ENCODE measurements at regions of chr9 and their contacts with region 1.

Region 1: GRCh38 chr9:127450830-127451724 is at the starts of genes LRSAM1 and RPL12:
- DNase-seq: peak; percentile 78 to 97
- H3K4me3 ChIP-seq: peak within 1 kb of the TSS; percentile 99
- H3K27ac ChIP-seq: peak within 1 kb of the TSS; percentile 95
- H3K4me1 ChIP-seq: peaks cover 23% of the 10 kb centered on the region
- H3K27me3 ChIP-seq: no peaks in the 10 kb centered on the region
- CTCF ChIP-seq: no peak
- total RNA-seq, gene LRSAM1: 44.0 and 63.9 TPM in 2 replicates
- total RNA-seq, gene RPL12: 1,648 and 1,717 TPM in 2 replicates

Region 2: DNA sequence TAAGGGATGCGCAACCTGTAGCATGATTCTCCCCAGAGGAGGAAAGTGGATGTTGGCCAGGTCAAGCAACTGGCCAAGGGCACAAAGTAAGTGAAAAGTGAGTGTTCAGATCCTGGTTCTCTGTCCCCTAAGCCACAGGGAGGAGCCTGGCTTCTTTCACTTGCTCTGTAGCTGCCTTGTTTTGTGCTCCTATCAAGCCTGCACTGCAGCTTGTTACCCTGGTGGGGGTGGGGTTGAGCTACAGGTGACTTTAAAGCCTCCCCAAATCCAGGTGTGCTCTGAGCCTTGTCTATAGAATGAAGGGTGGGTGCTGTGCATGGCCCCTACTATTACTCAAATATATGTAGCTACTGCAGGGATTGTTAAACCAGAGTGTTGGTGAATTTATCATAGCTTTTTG is 503.5 kb before region 1 on chr9:
- CTCF ChIA-PET with region 1: no interaction called
- POLR2A ChIA-PET with region 1: no interaction called
- intact Hi-C with region 1: loop called (anchors 10 kb)
- DNase-seq: peak; percentile 50 to 61
- H3K4me3 ChIP-seq: no peak overlapping the region
- H3K27ac ChIP-seq: no peak overlapping the region
- H3K4me1 ChIP-seq: 0 out of 2 replicates have a peak, but pooled peaks cover 7% of the 10 kb centered on the region
- H3K27me3 ChIP-seq: no peaks in the 10 kb centered on the region
- CTCF ChIP-seq: peak; percentile 64

Region 3: DNA sequence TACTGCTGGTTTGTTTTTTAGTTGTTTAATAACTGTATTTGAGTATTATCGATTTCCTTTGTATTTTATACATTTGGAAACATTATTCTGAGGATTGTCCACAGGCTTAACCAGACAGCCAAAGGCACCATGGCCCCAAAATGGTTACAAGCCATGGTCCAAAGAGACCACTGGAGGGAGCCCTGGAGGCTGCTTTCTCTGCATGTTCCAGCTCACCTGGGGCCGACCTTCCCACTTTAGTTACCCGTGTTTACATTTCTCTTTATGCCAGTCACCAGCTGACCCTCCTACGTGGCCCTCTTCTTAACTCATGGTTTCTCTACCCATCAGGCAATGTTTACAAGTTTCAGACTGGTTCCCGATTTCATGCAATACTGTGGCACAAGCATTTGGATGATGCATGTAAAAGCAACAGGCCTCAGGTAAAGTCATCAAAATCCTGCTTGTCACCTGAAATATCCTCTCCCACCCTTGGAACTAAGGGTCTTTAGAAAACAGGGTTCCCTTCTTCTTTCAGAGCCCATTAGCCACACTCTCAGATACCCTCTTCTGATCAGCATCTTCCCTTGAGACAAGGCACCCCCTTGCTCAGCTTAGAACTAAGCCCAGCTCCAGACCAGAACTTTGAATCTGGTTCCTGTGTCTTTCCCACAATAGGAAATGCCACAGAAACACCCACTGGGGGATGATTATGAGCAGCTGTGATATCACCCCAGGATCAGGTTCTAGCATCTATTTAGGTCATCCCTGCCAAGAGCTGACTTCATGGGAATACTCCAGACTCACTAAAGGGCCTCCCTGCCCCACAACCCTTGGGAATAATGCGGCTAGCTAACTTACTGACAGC is 236.4 kb before region 1 on chr9:
- CTCF ChIA-PET with region 1: interaction called, 7 read pairs
- POLR2A ChIA-PET with region 1: no interaction called
- intact Hi-C with region 1: loop called (anchors 1 kb)
- DNase-seq: peak; percentile 49 to 75
- H3K4me3 ChIP-seq: no peak overlapping the region
- H3K27ac ChIP-seq: no peak overlapping the region
- H3K4me1 ChIP-seq: 0 out of 2 replicates have a peak, but pooled peaks cover 4% of the 10 kb centered on the region
- H3K27me3 ChIP-seq: no peaks in the 10 kb centered on the region
- CTCF ChIP-seq: peak; percentile 89

Region 4: DNA sequence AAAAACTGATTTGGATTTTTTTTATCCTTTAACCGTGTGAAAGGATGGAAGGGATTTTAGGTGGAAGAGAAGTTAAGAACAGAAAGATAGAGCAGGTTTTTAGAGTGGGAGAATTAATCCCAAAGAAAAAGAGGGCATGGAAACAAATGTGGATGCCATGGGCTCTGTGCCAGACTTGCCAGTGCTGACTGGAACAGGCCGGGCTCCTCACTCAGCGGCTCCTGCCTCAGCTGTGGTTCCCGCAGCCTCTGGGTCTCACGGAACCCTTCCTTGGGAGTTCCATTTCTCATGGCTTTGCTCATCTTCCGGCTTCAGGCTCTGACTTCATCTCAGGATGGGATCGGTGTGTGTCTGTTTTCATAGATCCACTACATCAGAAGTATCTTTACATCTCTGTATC is 84.5 kb before region 1 on chr9:
- CTCF ChIA-PET with region 1: interaction called, 10 read pairs
- POLR2A ChIA-PET with region 1: no interaction called
- intact Hi-C with region 1: no loop called
- DNase-seq: no peak
- H3K4me3 ChIP-seq: no peak overlapping the region
- H3K27ac ChIP-seq: no peak overlapping the region
- H3K4me1 ChIP-seq: no peaks in the 10 kb centered on the region
- H3K27me3 ChIP-seq: no peaks in the 10 kb centered on the region
- CTCF ChIP-seq: no peak

Region 5: GRCh38 chr9:127411122-127411521 is 40.0 kb before region 1 on chr9:
- CTCF ChIA-PET with region 1: interaction called, 10 read pairs
- POLR2A ChIA-PET with region 1: no interaction called
- intact Hi-C with region 1: no loop called
- DNase-seq: no peak
- H3K4me3 ChIP-seq: no peak overlapping the region
- H3K27ac ChIP-seq: no peak overlapping the region
- H3K4me1 ChIP-seq: no peaks in the 10 kb centered on the region
- H3K27me3 ChIP-seq: no peaks in the 10 kb centered on the region
- CTCF ChIP-seq: no peak

Region 6: DNA sequence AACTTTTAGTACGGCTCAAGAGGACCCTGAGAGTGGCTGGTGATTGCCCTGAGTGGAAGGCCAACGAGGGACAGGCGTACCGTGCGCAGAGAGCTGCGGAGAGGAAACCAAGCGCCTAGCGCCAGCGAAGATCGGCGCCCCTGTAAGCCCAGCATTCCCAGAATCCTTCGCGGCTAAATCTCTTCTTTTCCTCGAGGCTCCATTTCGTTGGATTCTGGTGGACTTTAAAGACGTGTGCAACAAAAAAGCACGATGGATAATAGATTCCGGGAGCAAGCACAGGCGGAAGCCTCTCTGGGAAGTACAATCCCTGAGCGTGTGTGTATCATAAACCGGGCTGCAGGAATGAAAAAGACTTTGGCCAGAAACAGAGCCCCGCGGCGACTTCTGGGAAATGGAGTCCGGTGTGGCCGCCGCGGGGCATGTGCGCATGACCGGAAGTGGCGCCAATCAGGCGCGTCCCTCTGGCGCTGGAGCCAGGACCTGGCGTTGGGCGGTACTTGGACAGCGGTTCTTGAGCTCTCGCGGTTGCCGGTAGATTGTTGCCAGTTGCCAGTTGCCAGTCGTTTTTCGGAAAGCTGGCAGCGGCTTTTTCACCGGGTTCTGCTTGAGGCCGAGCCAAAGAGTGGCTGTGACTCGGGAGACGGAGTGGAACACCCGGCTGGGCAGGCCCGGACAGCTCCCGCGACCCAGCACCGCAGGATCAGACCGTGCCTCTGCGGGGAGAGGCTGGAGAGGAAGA is 27.0 kb before region 1 on chr9 and contains the start of gene ZNF79:
- CTCF ChIA-PET with region 1: no interaction called
- POLR2A ChIA-PET with region 1: interaction called, 5 read pairs
- intact Hi-C with region 1: loop called (anchors 2 kb)
- DNase-seq: peak; percentile 78 to 95
- H3K4me3 ChIP-seq: peak within 1 kb of the TSS; percentile 85
- H3K27ac ChIP-seq: peak within 1 kb of the TSS; percentile 42
- H3K4me1 ChIP-seq: peaks cover 17% of the 10 kb centered on the region
- H3K27me3 ChIP-seq: no peaks in the 10 kb centered on the region
- CTCF ChIP-seq: no peak
- total RNA-seq, gene ZNF79: 5.5 and 5.8 TPM in 2 replicates

Region 7: DNA sequence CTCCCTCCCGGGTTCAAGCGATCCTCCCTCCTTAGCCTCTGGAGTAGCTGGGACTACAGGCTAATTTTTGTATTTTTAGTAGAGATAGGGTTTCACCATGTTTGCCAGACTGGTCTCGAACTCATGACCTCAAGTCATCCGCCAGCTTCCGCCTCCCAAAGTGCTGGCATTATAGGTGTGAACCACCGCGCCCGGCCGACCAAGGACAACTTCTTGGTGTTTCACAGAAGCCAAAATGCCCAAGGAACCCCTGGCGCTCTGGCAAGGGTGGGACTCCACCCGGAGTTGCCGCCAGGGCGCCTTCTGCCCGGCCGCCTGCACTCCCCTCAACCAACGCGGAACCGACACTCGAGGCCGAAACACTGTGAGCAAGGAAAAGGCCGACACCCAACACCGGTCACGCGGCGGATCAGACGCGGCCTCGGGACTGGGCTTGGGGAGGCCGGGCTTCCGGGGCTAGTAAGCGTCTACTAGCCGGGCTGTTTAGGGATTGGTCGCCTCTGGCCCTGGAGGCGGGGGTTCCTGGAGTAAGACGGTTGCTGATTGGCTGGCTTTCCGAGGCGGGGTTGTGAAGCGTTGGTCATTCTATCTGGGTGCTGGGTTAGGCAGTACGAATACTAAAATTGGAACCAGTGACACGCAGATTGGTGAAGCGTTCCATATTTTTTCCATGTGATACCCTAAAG is 248.1 kb after region 1 on chr9:
- CTCF ChIA-PET with region 1: no interaction called
- POLR2A ChIA-PET with region 1: no interaction called
- intact Hi-C with region 1: no loop called
- DNase-seq: peak; percentile 88 to 97
- H3K4me3 ChIP-seq: peak overlapping the region; percentile 40; the same call in 1 of the 2 replicates
- H3K27ac ChIP-seq: no peak overlapping the region
- H3K4me1 ChIP-seq: peaks cover 4% of the 10 kb centered on the region
- H3K27me3 ChIP-seq: no peaks in the 10 kb centered on the region
- CTCF ChIP-seq: no peak

Measured in PC-9 (cell line).